Activated CD4-positive, alpha-beta T cell treated with anti-CD3 and anti-CD28 coated beads for 36 hours (primary cell): ENCODE measurements at regions of chr12 and their contacts with region 1.

Region 1: DNA sequence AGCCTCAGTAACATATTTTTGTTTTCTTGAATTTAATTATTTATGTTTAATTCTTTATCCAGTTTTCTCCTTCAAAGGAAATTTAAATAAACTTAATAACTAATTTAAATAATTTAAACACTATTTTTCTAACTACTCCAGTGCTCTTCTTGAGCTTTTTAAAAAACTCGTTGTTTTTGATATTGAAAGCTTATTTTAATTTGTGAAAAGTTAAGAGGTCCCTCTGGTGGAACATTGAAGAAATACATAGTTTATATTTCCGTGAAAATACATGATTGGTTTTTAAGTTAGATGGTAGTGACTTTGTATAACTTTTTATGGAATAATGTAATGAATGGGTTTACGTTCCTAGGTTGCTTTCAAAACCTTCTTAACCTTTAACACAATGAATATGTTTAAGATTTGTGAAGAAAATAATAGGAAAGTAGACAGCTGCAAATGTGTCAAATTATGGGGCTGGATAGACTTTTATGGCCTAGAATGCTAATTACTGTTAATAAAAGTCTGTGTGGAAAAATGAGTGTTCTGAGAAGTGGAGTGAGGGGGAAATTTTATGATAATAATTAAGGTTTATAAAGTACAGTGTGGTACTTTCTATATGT is 45.9 kb upstream of the MSRB3 start:
- DNase-seq: no peak
- ATAC-seq: no peak
- H3K4me3 Mint-ChIP-seq: no peak overlapping the region
- H3K27ac Mint-ChIP-seq: no peak overlapping the region
- H3K4me1 Mint-ChIP-seq: peaks cover 13% of the 10 kb centered on the region
- H3K27me3 Mint-ChIP-seq: no peaks in the 10 kb centered on the region

Region 2: GRCh38 chr12:64801381-64801780 is 431.2 kb before region 1 on chr12:
- CTCF ChIA-PET with region 1: interaction called, 4 read pairs
- POLR2A ChIA-PET with region 1: no interaction called
- intact Hi-C with region 1: loop called in 1 of 2 experiments (anchors 5 kb)
- DNase-seq: no peak
- ATAC-seq: no peak
- H3K4me3 Mint-ChIP-seq: no peak overlapping the region
- H3K27ac Mint-ChIP-seq: no peak overlapping the region
- H3K4me1 Mint-ChIP-seq: no peaks in the 10 kb centered on the region
- H3K27me3 Mint-ChIP-seq: peaks cover 31% of the 10 kb centered on the region

Region 3: DNA sequence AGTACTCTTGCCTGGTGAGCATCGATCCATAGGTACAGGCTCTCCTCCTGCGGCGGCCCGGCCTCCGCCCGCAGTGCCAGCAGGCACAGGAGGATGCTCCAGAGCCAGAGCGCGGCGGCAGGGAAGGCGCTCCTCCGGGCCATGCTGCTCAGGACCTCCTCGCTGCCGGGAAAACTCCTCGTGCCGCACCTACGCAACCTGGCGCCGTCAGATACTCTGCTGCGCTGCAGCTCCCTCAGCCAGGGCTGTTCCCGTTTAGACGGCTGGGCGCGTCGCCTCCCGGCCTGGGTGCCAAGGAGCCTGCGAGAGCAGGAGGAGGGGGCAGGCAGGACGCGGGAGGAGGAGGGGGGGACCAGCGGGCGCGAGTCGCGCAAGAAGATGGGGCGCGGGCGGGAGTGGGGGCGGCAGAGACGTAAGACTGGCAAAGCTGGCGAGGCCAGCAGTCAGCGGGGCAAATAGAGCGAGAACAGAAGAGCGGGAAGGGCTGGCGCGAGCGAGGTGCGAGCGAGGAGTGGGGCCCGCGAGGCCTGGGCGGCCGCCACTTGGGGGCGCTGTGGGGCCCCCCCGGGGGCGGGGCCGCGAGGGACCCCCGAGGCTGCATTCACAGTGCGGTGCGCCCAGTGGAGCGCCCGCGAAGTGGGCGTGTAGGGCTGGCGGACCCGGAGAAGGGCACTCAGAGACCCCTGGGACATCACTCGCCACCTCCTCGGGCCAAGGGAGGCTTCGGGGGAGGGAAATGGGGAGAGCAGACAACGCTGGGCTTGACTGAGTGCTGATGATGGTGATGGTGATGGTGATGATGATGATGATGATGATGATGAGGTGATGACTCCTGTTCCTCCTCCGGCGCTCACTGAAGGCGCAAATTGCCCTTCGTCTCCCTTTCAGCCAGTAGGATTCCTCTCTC is 111.3 kb before region 1 on chr12 and contains the start of gene WIF1:
- CTCF ChIA-PET with region 1: interaction called, 8 read pairs
- POLR2A ChIA-PET with region 1: no interaction called
- intact Hi-C with region 1: loop called (anchors 1 to 5 kb)
- DNase-seq: peak; percentile 56
- ATAC-seq: peak; percentile 82
- H3K4me3 Mint-ChIP-seq: peak within 1 kb of the TSS; percentile 32
- H3K27ac Mint-ChIP-seq: no peak within 1 kb of the TSS
- H3K4me1 Mint-ChIP-seq: peaks cover 6% of the 10 kb centered on the region
- H3K27me3 Mint-ChIP-seq: peaks cover 31% of the 10 kb centered on the region
- total RNA-seq, gene WIF1: not detected

Region 4: DNA sequence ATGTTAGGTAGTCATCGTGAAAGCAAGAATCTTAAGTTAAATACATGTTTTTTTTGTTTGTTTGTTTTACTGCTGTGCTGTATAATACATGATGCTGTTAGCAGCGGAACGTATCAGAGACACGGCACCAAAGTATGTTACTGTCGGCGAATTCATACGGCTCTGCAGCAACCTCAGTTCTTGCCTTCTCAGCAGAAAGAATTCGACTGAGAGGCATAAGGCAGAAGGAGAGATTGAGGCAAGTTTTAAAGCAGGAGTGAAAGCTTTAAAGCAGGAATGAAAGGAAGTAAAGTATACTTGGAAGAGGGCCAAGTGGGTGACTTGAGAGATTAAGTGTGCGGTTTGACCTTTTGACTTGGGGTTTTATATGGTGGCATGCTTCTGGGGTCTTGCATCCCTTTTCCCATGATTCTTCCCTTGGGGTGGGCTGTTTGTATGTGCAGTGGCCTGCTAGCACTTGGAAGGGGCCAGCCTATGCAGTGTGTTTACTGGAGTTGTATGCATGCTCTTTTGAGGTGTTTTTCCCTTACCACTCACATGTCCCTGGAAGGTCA is 39.5 kb before region 1 on chr12:
- CTCF ChIA-PET with region 1: interaction called, 11 read pairs
- POLR2A ChIA-PET with region 1: no interaction called
- intact Hi-C with region 1: no loop called
- DNase-seq: no peak
- ATAC-seq: no peak
- H3K4me3 Mint-ChIP-seq: no peak overlapping the region
- H3K27ac Mint-ChIP-seq: peak overlapping the region; percentile 43
- H3K4me1 Mint-ChIP-seq: peaks cover 57% of the 10 kb centered on the region
- H3K27me3 Mint-ChIP-seq: no peaks in the 10 kb centered on the region

Region 5: DNA sequence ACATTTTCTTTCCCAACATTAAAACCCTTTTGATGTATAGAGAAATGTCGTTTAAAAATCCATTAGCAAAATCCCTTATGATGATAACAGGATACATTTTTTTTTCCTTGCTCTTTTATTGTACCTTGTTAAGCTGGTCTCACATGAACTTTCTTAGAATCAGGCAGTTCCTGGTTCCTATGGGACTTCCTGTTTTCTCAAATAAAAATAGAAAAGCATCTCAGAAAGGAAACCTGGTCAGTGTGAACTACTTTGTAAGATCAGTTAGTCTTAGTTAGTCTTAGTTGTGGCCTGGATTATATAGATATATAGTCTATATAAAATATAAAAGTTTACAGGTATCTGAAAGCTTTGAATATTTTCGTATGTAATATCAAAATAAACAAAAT is 22.9 kb before region 1 on chr12:
- CTCF ChIA-PET with region 1: interaction called, 14 read pairs
- POLR2A ChIA-PET with region 1: no interaction called
- intact Hi-C with region 1: no loop called
- DNase-seq: no peak
- ATAC-seq: no peak
- H3K4me3 Mint-ChIP-seq: peak overlapping the region; percentile 47
- H3K27ac Mint-ChIP-seq: peak overlapping the region; percentile 88
- H3K4me1 Mint-ChIP-seq: peaks cover 50% of the 10 kb centered on the region
- H3K27me3 Mint-ChIP-seq: no peaks in the 10 kb centered on the region

Region 6: GRCh38 chr12:65217086-65217485 is 15.5 kb before region 1 on chr12:
- CTCF ChIA-PET with region 1: interaction called, 18 read pairs
- POLR2A ChIA-PET with region 1: no interaction called
- intact Hi-C with region 1: no loop called
- DNase-seq: no peak
- ATAC-seq: no peak
- H3K4me3 Mint-ChIP-seq: no peak overlapping the region
- H3K27ac Mint-ChIP-seq: no peak overlapping the region
- H3K4me1 Mint-ChIP-seq: peaks cover 3% of the 10 kb centered on the region
- H3K27me3 Mint-ChIP-seq: no peaks in the 10 kb centered on the region

Region 7: GRCh38 chr12:65800937-65801336 is 568.4 kb after region 1 on chr12:
- CTCF ChIA-PET with region 1: no interaction called
- POLR2A ChIA-PET with region 1: no interaction called
- intact Hi-C with region 1: no loop called
- DNase-seq: no peak
- ATAC-seq: no peak
- H3K4me3 Mint-ChIP-seq: no peak overlapping the region
- H3K27ac Mint-ChIP-seq: no peak overlapping the region
- H3K4me1 Mint-ChIP-seq: no peaks in the 10 kb centered on the region
- H3K27me3 Mint-ChIP-seq: peaks cover 21% of the 10 kb centered on the region